ENCODE measurements at regions of chr5 and their contacts with region 1.

Region 1: GRCh38 chr5:91670563-91670962 is 287.4 kb upstream of the ARRDC3 start:
- DNase-seq: no peak
- H3K4me3 ChIP-seq: no peak overlapping the region
- CTCF ChIP-seq: no peak

Region 2: DNA sequence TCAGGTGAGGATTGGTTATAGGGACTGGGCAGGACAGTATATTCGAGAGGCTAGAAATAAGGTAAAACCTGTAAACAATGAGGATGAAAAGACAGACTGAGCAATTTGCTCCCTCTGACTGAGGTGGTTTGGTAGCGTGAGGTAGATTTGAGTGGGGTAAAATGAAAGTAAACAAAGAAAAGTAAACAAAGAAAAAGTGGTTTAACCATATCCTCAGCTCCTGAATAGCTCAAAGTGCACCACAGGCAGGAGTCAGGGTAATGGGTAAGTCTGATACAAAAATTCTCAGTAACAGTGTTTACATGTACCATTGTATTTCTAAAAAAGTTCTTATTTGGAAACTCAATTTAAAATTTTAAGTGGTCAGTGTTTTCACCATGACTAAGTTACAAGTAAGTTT is 84.3 kb before region 1 on chr5:
- in situ Hi-C with region 1: loop called (anchors 5 kb)
- DNase-seq: no peak
- H3K4me3 ChIP-seq: no peak overlapping the region
- CTCF ChIP-seq: no peak